Dorsolateral prefrontal cortex (tissue), 120 donors: ENCODE measurements at regions of chrX and their contacts with region 1.

Region 1: DNA sequence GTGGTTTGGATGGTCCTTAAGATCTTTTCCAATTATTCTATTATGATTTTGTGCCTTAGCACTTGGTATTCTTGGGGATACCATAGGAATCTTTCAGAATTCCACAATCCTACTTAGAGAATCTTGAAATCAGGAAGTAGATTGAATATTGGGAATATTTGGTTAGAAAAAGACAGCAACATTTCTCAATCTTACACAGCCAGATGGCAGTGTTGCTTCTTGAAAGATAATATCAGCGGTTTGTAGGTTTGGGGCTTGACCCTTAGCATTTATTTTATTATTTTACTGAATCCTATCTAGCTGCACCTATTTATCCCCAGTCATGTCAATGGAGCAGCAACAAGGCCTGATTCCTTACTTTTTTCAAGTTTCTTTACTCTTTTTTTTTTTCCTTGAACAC is 28.6 kb downstream of the MAGEB1 start:
- DNase-seq: no peak
- H3K4me3 ChIP-seq: no peak overlapping the region
- H3K27ac ChIP-seq: no peak overlapping the region
- H3K27me3 ChIP-seq: peaks cover 0 to 68% (median 23%) of the 10 kb centered on the region in 45 donors
- CTCF ChIP-seq: peak in 53 of 56 donors; percentile 10 to 70 (median 44)

Region 2: GRCh38 chrX:30504309-30504708 is 228.8 kb after region 1 on chrX:
- intact Hi-C with region 1: loop called (anchors 2 to 10 kb)
- DNase-seq: no peak
- H3K4me3 ChIP-seq: no peak overlapping the region
- H3K27ac ChIP-seq: no peak overlapping the region
- H3K27me3 ChIP-seq: peaks cover 0 to 58% (median 27%) of the 10 kb centered on the region in 45 donors
- CTCF ChIP-seq: peak; percentile 28 to 83 (median 64)